ENCODE measurements at regions of chr3 and their contacts with region 1.

Region 1: GRCh38 chr3:133426721-133427120 is 26.9 kb downstream of the BFSP2 start:
- DNase-seq: no peak
- H3K4me3 ChIP-seq: no peak overlapping the region
- H3K27ac ChIP-seq: no peak overlapping the region
- H3K4me1 ChIP-seq: no peaks in the 10 kb centered on the region
- H3K27me3 ChIP-seq: peaks cover 39% of the 10 kb centered on the region
- CTCF ChIP-seq: no peak

Region 2: GRCh38 chr3:133040696-133041523 is 385.8 kb before region 1 on chr3:
- CTCF ChIA-PET with region 1: no interaction called
- POLR2A ChIA-PET with region 1: no interaction called
- intact Hi-C with region 1: loop called (anchors 1 kb)
- DNase-seq: peak; percentile 36 to 61
- H3K4me3 ChIP-seq: no peak overlapping the region
- H3K27ac ChIP-seq: no peak overlapping the region
- H3K4me1 ChIP-seq: no peaks in the 10 kb centered on the region
- H3K27me3 ChIP-seq: peaks cover 42% of the 10 kb centered on the region
- CTCF ChIP-seq: peak; percentile 74

Region 3: DNA sequence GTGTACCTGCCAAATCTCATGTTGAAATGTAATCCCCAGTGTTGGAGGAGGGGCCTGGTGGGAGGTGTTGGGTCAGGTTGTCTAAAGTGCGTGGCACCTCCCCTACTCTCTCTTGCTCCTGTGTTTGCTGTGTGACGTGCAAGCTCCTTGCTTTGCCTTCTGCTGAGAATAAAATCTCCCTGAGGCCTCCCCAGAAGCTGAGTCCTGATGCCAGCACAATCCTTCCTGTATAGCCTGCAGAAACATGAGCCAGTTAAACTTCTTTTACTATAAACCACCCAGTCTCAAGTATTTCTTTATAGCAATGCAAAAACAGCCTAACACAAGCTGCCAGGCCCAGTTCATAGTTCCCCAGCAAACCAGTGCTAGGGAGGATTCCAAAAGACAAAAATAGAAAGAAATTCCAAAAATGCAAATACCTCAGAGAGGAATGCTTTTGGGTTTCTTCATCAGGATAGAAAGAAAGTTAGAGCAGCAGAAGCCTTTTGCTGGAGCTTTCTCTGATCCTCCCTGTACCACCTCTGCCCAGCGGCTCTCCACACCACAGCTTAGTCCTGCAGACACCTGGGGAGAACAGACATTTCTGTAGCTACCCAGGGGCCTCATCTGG is 120.8 kb after region 1 on chr3:
- CTCF ChIA-PET with region 1: interaction called, 17 read pairs
- POLR2A ChIA-PET with region 1: no interaction called
- intact Hi-C with region 1: no loop called
- DNase-seq: peak; percentile 34 to 55
- H3K4me3 ChIP-seq: no peak overlapping the region
- H3K27ac ChIP-seq: peak overlapping the region; percentile 34
- H3K4me1 ChIP-seq: peaks cover 44% of the 10 kb centered on the region
- H3K27me3 ChIP-seq: no peaks in the 10 kb centered on the region
- CTCF ChIP-seq: no peak

Region 4: DNA sequence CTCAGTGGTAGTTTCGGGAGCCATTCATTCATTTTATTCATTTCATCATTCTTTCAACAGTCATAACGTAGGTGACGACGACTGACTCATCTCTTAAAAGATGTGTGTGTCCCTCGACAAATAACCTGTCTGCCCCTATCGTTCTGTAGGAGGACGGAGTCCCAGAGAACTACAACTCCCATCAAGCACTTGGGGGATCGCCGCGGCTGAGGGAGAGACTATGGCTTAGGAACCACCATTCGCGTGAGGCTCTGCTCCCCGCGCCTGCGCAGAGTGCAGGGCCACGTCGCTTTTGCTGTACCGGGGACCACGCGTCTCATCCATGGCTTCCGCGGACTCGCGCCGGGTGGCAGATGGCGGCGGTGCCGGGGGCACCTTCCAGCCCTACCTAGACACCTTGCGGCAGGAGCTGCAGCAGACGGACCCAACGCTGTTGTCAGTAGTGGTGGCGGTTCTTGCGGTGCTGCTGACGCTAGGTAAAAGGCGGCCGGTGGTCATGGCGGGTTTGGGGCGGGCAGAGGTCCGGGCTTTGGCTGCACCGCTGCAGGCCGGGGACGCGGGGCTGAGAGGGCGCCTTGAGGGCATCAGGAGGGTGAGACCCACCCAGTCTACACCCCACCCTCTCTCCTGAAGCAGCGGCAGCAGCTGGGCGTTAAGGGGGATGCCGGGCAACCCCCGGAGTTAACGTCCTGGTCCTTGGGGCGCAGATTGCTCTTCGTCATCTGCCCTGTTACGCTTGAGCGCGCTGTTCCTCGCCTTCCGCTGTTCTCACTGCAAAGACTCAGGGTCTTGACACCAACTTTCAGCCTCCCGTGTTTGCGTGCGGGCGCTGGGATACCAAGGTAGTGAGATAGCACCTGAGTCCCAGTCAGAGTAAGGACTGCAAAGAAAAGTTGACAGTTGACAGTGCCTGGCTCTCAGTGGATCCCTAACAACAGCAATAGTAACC is 379.1 kb after region 1 on chr3 and contains the start of gene SRPRB:
- CTCF ChIA-PET with region 1: no interaction called
- POLR2A ChIA-PET with region 1: no interaction called
- intact Hi-C with region 1: loop called (anchors 10 kb)
- DNase-seq: peak; percentile 89 to 92
- H3K4me3 ChIP-seq: peak within 1 kb of the TSS; percentile 79
- H3K27ac ChIP-seq: peak within 1 kb of the TSS; percentile 43; the same call in 1 of the 2 replicates
- H3K4me1 ChIP-seq: peaks cover 18% of the 10 kb centered on the region
- H3K27me3 ChIP-seq: no peaks in the 10 kb centered on the region
- CTCF ChIP-seq: no peak
- total RNA-seq, gene SRPRB: 25.5 and 29.8 TPM in 2 replicates

Measured in PC-9 (cell line).